ENCODE measurements at regions of chr20 and their contacts with region 1.

Region 1: DNA sequence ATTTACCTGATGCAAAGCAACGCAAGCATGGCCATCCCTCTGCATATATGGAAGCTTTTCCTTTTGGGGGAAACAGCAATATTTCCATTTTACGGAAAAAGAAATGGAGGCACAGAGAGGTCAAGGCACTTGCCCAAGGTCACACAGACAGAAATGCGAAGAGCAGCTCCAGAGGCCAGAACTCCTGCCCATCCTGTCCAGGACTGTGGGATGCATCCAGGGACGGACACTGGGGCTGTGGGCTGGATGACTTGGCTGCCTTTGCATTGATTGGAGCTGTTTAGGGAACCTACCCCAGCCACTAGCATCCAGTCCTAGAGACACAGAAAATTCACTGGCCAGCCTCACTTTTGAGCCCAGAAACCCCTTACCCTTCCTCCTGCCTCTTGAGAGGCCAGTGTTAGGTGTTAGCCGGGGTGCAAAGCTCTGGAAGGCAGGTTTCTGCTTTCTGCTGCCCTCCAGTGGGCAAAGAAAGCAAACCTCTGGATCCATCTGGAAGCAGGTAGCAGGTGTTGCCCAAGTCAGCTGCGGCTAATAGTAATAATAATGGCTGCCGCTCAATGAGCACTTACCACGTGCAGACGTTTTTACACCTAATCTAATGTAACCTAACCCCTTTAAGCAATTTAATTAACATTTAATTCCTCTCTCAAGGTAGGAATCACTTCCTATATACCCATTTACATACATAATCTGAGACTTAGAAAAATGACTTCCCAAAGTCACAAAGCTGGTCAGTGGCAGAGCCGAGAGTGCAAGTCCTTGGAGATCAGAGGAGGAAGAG is 31.7 kb upstream of the CCN5 start:
- DNase-seq: no peak
- H3K4me3 ChIP-seq: no peak overlapping the region
- H3K27ac ChIP-seq: no peak overlapping the region
- H3K4me1 ChIP-seq: peaks cover 9% of the 10 kb centered on the region
- H3K27me3 ChIP-seq: no peaks in the 10 kb centered on the region
- CTCF ChIP-seq: peak in 2 of 3 experiments; percentile 15 to 54
- POLR2A ChIP-seq: no peak

Region 2: DNA sequence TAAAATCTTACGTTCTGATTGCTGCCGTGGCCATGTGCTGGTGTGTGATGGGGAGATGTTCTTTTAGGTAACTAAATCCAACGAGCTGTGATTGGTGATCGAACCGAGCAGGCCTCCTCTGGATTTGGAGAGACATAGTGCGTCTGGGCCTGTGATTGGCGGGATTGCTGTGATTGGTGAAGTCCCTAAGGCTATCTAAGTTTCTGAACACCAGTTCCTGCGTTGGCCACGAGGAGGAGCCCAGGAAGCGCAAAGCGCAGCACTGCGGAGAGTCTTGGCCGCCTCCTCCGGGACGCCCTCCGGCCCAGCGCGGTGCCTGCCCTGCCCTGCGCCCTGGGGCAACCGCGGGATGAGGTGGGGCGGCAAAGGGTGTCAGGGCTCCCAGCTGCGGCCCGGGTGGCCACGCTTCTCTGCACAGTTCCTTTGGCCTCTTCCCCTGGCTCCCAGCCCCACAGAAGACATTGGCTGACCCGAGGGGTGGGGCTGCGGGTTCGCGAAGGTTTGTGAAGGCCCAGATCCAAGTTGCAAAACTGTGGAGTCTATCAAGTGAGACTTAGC is 294.9 kb before region 1 on chr20:
- intact Hi-C with region 1: loop called (anchors 2 kb)
- DNase-seq: no peak
- H3K4me3 ChIP-seq: no peak overlapping the region
- H3K27ac ChIP-seq: no peak overlapping the region
- H3K4me1 ChIP-seq: peaks cover 12% of the 10 kb centered on the region
- H3K27me3 ChIP-seq: no peaks in the 10 kb centered on the region
- CTCF ChIP-seq: peak in 2 of 3 experiments; percentile 51 to 62
- POLR2A ChIP-seq: no peak

Region 3: GRCh38 chr20:44733341-44734069 is 50.0 kb after region 1 on chr20:
- intact Hi-C with region 1: loop called (anchors 2 kb)
- DNase-seq: no peak
- H3K4me3 ChIP-seq: no peak overlapping the region
- H3K27ac ChIP-seq: peak overlapping the region; percentile 54
- H3K4me1 ChIP-seq: peaks cover 18% of the 10 kb centered on the region
- H3K27me3 ChIP-seq: no peaks in the 10 kb centered on the region
- CTCF ChIP-seq: peak; percentile 79 to 97 (median 86)
- POLR2A ChIP-seq: no peak

Region 4: DNA sequence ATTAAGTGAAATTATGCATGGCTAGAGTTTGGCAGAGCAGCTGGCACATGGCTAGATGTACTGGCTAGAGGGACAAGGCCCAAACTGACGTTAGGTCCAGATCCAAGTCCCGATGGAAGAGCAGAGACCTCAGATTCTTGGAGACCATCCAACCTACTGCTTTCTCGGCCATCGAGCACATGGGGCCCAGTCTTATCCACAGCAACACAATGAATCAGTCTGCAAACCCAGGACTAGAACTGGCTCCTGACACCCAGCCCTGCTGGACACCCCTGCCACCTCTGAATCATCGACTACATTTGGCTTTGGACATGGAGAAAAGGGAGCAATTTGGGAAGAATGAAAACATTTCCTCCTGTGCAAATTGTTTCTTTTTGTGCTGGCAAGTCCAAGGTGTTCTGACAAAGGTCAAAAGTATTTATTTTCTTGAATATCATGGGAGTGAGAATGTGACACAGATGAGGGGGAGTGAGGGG is 178.1 kb after region 1 on chr20:
- intact Hi-C with region 1: loop called (anchors 10 kb)
- DNase-seq: peak in 1 of 2 donors; percentile 89
- H3K4me3 ChIP-seq: no peak overlapping the region
- H3K27ac ChIP-seq: peak overlapping the region; percentile 61
- H3K4me1 ChIP-seq: peaks cover 7% of the 10 kb centered on the region
- H3K27me3 ChIP-seq: no peaks in the 10 kb centered on the region
- CTCF ChIP-seq: no peak
- POLR2A ChIP-seq: no peak

Measured in vagina (tissue), 2 donors.